Activated CD4-positive, alpha-beta T cell treated with anti-CD3 and anti-CD28 coated beads for 36 hours (primary cell): ENCODE measurements at regions of chr3 and their contacts with region 1.

Region 1: GRCh38 chr3:184017672-184018423 is at the start of gene ABCC5:
- DNase-seq: peak; percentile 91
- ATAC-seq: peak; percentile 96
- H3K4me3 Mint-ChIP-seq: peak within 1 kb of the TSS; percentile 98
- H3K27ac Mint-ChIP-seq: peak within 1 kb of the TSS; percentile 85
- H3K4me1 Mint-ChIP-seq: peaks cover 17% of the 10 kb centered on the region
- H3K27me3 Mint-ChIP-seq: peaks cover 9% of the 10 kb centered on the region
- total RNA-seq, gene ABCC5: 12.5 to 15.8 TPM

Region 2: DNA sequence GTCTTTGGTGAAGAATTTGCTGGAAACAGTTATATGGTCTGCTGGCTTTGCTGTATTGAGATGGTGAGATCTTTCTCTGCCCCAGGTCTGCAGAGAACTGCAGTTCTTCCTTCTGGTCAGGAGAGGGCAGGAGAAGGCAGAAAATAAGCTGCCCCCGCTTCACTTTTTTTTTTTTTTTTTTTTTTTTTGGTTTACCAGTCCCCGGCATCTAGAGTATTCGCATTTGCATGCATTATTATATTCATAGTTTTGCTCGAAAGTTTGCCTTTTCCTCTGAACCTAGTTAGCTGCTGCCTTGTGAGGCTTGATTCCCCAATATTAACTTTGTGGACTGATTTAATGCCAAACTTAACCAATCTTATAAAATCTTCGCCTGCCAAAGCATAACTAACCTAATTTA is 122.6 kb before region 1 on chr3:
- CTCF ChIA-PET with region 1: interaction called, 20 read pairs
- POLR2A ChIA-PET with region 1: no interaction called
- intact Hi-C with region 1: loop called (anchors 1 kb)
- DNase-seq: peak; percentile 38
- ATAC-seq: peak; percentile 59
- H3K4me3 Mint-ChIP-seq: no peak overlapping the region
- H3K27ac Mint-ChIP-seq: no peak overlapping the region
- H3K4me1 Mint-ChIP-seq: no peaks in the 10 kb centered on the region
- H3K27me3 Mint-ChIP-seq: peaks cover 7% of the 10 kb centered on the region

Region 3: GRCh38 chr3:183904833-183905780 is 112.7 kb before region 1 on chr3:
- CTCF ChIA-PET with region 1: no interaction called
- POLR2A ChIA-PET with region 1: no interaction called
- intact Hi-C with region 1: loop called in 1 of 2 experiments (anchors 2 kb)
- DNase-seq: no peak
- ATAC-seq: no peak
- H3K4me3 Mint-ChIP-seq: no peak overlapping the region
- H3K27ac Mint-ChIP-seq: no peak overlapping the region
- H3K4me1 Mint-ChIP-seq: no peaks in the 10 kb centered on the region
- H3K27me3 Mint-ChIP-seq: peaks cover 5% of the 10 kb centered on the region

Region 4: GRCh38 chr3:184135149-184135910 is 117.5 kb after region 1 on chr3 and contains the start of gene EIF2B5:
- CTCF ChIA-PET with region 1: interaction called, 3 read pairs
- POLR2A ChIA-PET with region 1: no interaction called
- intact Hi-C with region 1: loop called in 1 of 2 experiments (anchors 1 kb)
- DNase-seq: peak; percentile 93
- ATAC-seq: peak; percentile 90
- H3K4me3 Mint-ChIP-seq: peak within 1 kb of the TSS; percentile 97
- H3K27ac Mint-ChIP-seq: peak within 1 kb of the TSS; percentile 92
- H3K4me1 Mint-ChIP-seq: peaks cover 29% of the 10 kb centered on the region
- H3K27me3 Mint-ChIP-seq: no peaks in the 10 kb centered on the region
- total RNA-seq, gene EIF2B5: 46.4 to 60.6 TPM